ENCODE measurements at regions of chr1 and their contacts with region 1.

Region 1: GRCh38 chr1:213015099-213016050 is at the start of gene ANGEL2:
- DNase-seq: peak; percentile 77 to 97 (median 93)
- ATAC-seq: peak; percentile 99
- H3K4me3 ChIP-seq: peak within 1 kb of the TSS; percentile 87
- H3K4me3 Mint-ChIP-seq: peak within 1 kb of the TSS; percentile 92 to 100 (median 100)
- H3K27ac ChIP-seq: peak within 1 kb of the TSS; percentile 82
- H3K27ac Mint-ChIP-seq: peak within 1 kb of the TSS; percentile 94 to 100 (median 99)
- H3K4me1 ChIP-seq: peaks cover 12 to 19% of the 10 kb centered on the region in 2 donors
- H3K4me1 Mint-ChIP-seq: peaks cover 26 to 47% (median 40%) of the 10 kb centered on the region in 7 donors
- H3K27me3 ChIP-seq: no peaks in the 10 kb centered on the region
- H3K27me3 Mint-ChIP-seq: peaks cover 0 to 7% (median 0%) of the 10 kb centered on the region in 5 donors
- total RNA-seq, gene ANGEL2: 57.8 to 96.5 (median 63.4) TPM

Region 2: GRCh38 chr1:211830330-211831142 is 1184.8 kb before region 1 on chr1 and contains the start of gene LPGAT1:
- CTCF ChIA-PET with region 1: no interaction called
- POLR2A ChIA-PET with region 1: no interaction called
- intact Hi-C with region 1: loop called in 1 of 2 experiments (anchors 5 kb)
- DNase-seq: peak; percentile 28 to 81 (median 54)
- ATAC-seq: peak; percentile 92
- H3K4me3 ChIP-seq: peak within 1 kb of the TSS; percentile 68
- H3K4me3 Mint-ChIP-seq: peak within 1 kb of the TSS; percentile 88 to 97 (median 90)
- H3K27ac ChIP-seq: peak within 1 kb of the TSS; percentile 64
- H3K27ac Mint-ChIP-seq: peak within 1 kb of the TSS; percentile 60 to 94 (median 85)
- H3K4me1 ChIP-seq: peaks cover 20 to 40% of the 10 kb centered on the region in 2 donors
- H3K4me1 Mint-ChIP-seq: peaks cover 34 to 69% (median 64%) of the 10 kb centered on the region in 7 donors
- H3K27me3 ChIP-seq: no peaks in the 10 kb centered on the region
- H3K27me3 Mint-ChIP-seq: peaks cover 0 to 3% (median 0%) of the 10 kb centered on the region in 5 donors
- total RNA-seq, gene LPGAT1: 11.7 to 76.1 (median 19.3) TPM

Region 3: DNA sequence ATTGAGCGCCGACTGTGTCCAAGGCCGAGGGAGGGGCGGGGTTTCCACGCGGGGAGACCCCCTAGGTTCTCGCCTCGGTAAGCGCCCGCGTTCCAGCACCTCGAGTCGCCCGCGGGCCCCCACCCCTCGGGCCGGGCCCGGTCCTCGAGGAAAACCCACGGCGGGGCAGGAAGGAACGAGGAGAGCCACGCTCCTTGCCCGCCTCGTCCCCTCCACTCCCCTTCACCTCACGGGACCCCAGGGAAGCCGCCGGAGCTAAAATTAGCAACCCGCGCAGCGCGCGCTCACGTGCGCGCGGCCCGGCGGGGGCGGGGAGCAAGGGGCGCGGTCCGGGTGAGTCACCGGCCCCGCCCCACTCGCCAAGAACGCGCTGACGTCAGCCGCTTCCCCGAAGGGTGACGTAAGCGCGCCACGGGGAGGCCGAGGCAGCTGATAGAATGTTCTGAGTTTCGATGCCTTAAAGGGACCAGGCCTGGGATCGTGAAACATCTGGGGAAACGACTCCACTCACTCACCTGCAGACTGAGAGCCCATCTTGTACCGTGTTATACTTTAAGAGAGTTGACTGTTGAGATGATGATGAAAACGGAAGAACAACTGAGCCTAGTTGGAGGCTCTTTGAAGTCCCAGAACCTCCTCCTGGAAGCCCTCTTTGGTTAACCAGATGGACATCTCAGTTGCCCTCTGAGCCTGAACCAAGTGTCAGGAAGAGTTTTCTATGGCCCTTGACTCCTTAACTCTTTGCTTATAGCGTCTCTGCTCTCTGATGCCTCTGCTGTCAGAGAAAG is 456.5 kb before region 1 on chr1:
- CTCF ChIA-PET with region 1: no interaction called
- POLR2A ChIA-PET with region 1: no interaction called
- intact Hi-C with region 1: loop called (anchors 1 to 10 kb)
- DNase-seq: peak; percentile 83 to 93 (median 91)
- ATAC-seq: peak; percentile 97
- H3K4me3 ChIP-seq: peak overlapping the region; percentile 54
- H3K4me3 Mint-ChIP-seq: peak overlapping the region; percentile 82 to 95 (median 90)
- H3K27ac ChIP-seq: peak overlapping the region; percentile 74
- H3K27ac Mint-ChIP-seq: peak overlapping the region; percentile 91 to 99 (median 98)
- H3K4me1 ChIP-seq: peaks cover 7 to 13% of the 10 kb centered on the region in 2 donors
- H3K4me1 Mint-ChIP-seq: peaks cover 6 to 15% (median 9%) of the 10 kb centered on the region in 7 donors
- H3K27me3 ChIP-seq: no peaks in the 10 kb centered on the region
- H3K27me3 Mint-ChIP-seq: peaks cover 0 to 45% (median 0%) of the 10 kb centered on the region in 5 donors

Region 4: DNA sequence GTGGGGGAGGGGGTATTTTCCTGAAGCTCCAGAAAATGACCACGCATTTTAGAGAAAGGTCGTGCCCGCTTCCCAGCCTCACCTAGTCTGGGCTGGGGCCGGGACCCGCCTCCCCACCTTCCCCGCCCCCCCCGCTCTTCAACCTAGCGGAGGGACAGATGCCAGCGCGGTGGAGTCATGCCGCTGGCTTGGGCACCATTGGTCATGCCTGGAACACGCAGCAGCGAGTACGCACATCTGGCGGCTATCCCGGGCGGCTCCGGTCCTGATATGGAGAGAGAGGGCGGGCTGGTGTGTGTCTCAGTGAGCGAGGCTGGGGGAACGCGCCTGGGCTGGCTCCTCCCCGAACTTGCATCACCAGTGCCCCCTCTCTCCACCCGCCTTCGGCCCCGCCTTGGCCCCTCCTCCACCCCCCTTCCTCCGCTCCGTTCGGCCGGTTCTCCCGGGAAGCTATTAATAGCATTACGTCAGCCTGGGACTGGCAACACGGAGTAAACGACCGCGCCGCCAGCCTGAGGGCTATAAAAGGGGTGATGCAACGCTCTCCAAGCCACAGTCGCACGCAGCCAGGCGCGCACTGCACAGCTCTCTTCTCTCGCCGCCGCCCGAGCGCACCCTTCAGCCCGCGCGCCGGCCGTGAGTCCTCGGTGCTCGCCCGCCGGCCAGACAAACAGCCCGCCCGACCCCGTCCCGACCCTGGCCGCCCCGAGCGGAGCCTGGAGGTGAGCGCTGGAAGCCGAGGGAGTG is 407.0 kb before region 1 on chr1 and contains the start of gene ATF3:
- CTCF ChIA-PET with region 1: no interaction called
- POLR2A ChIA-PET with region 1: no interaction called
- intact Hi-C with region 1: loop called in 1 of 2 experiments (anchors 1 kb)
- DNase-seq: peak; percentile 27 to 90 (median 47)
- ATAC-seq: peak; percentile 87
- H3K4me3 ChIP-seq: peak within 1 kb of the TSS; percentile 70
- H3K4me3 Mint-ChIP-seq: peak within 1 kb of the TSS; percentile 90 to 98 (median 95)
- H3K27ac ChIP-seq: no peak within 1 kb of the TSS
- H3K27ac Mint-ChIP-seq: peak within 1 kb of the TSS; percentile 40 to 98 (median 76)
- H3K4me1 ChIP-seq: peaks cover 17 to 23% of the 10 kb centered on the region in 2 donors
- H3K4me1 Mint-ChIP-seq: peaks cover 17 to 55% (median 21%) of the 10 kb centered on the region in 7 donors
- H3K27me3 ChIP-seq: peaks cover 17 to 26% of the 10 kb centered on the region in 2 donors
- H3K27me3 Mint-ChIP-seq: peaks cover 47 to 66% (median 58%) of the 10 kb centered on the region in 5 donors
- total RNA-seq, gene ATF3: 0.57 to 83.4 (median 12.5) TPM

Region 5: DNA sequence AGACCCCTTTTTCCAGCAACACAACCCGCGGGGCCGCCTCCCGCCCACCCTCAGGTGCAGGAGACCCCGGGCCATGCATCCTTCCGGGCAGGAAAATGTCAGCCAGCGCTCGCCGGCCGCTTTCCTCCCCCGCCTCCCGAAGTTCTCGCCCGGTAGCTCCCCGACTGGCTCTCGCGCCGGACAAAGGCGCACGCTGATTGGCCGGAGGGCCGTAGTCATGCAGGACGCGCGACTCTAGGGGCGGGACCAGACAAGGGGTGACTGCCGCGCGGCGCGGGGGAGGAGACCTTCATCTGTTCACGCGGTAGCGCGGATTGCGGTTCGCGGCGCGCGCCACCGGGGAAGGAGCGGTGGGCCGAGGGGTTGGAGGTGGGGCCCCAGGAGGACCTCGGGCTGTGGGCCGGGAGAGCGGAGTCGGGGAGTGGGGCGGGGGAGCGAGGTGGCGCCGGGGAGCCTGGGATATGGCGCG is 157.3 kb before region 1 on chr1 and contains the start of gene FLVCR1:
- CTCF ChIA-PET with region 1: no interaction called
- POLR2A ChIA-PET with region 1: no interaction called
- intact Hi-C with region 1: loop called (anchors 1 kb)
- DNase-seq: peak; percentile 74 to 96 (median 80)
- ATAC-seq: peak; percentile 99
- H3K4me3 ChIP-seq: peak within 1 kb of the TSS; percentile 72
- H3K4me3 Mint-ChIP-seq: peak within 1 kb of the TSS in 6 of 10 donors; percentile 95 to 97 (median 96)
- H3K27ac ChIP-seq: peak within 1 kb of the TSS; percentile 68
- H3K27ac Mint-ChIP-seq: peak within 1 kb of the TSS; percentile 77 to 96 (median 89)
- H3K4me1 ChIP-seq: peaks cover 9 to 16% of the 10 kb centered on the region in 2 donors
- H3K4me1 Mint-ChIP-seq: peaks cover 9 to 34% (median 21%) of the 10 kb centered on the region in 7 donors
- H3K27me3 ChIP-seq: no peaks in the 10 kb centered on the region
- H3K27me3 Mint-ChIP-seq: no peaks in the 10 kb centered on the region
- total RNA-seq, gene FLVCR1: 7.4 to 12.2 (median 8.2) TPM

Region 6: GRCh38 chr1:212967801-212968200 is 47.6 kb before region 1 on chr1:
- CTCF ChIA-PET with region 1: no interaction called
- POLR2A ChIA-PET with region 1: no interaction called
- intact Hi-C with region 1: no loop called
- DNase-seq: no peak
- ATAC-seq: no peak
- H3K4me3 ChIP-seq: no peak overlapping the region
- H3K4me3 Mint-ChIP-seq: no peak overlapping the region
- H3K27ac ChIP-seq: no peak overlapping the region
- H3K27ac Mint-ChIP-seq: no peak overlapping the region
- H3K4me1 ChIP-seq: no peaks in the 10 kb centered on the region
- H3K4me1 Mint-ChIP-seq: peaks cover 0 to 5% (median 0%) of the 10 kb centered on the region in 7 donors
- H3K27me3 ChIP-seq: peaks cover 0 to 4% of the 10 kb centered on the region in 2 donors
- H3K27me3 Mint-ChIP-seq: peaks cover 13 to 38% (median 13%) of the 10 kb centered on the region in 5 donors

Region 7: DNA sequence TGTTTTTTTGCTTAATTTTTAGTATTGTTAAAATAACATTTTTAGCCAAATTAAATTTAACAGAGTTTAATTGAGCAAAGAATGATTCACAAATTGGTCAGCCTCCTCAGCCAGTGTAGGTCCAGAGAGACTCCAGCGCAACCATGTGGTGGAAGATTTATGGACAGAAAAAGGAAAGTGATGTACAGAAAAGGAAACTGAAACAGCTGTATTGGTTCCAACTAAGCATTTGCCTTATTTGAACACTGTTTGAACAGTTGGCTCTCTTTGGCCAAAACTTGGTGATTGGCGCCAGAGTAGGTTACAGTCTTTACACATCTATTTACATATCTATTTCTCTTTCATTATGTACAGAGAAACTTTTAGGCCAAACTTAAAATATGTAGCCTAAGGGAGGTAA is 55.0 kb after region 1 on chr1:
- CTCF ChIA-PET with region 1: no interaction called
- POLR2A ChIA-PET with region 1: no interaction called
- intact Hi-C with region 1: loop called in 1 of 2 experiments (anchors 5 kb)
- DNase-seq: no peak
- ATAC-seq: peak; percentile 71
- H3K4me3 ChIP-seq: no peak overlapping the region
- H3K4me3 Mint-ChIP-seq: peak overlapping the region in 1 of 10 donors; percentile 53
- H3K27ac ChIP-seq: no peak overlapping the region
- H3K27ac Mint-ChIP-seq: peak overlapping the region in 1 of 9 donors; percentile 9
- H3K4me1 ChIP-seq: peaks cover 0 to 7% of the 10 kb centered on the region in 2 donors
- H3K4me1 Mint-ChIP-seq: peaks cover 7 to 36% (median 10%) of the 10 kb centered on the region in 7 donors
- H3K27me3 ChIP-seq: no peaks in the 10 kb centered on the region
- H3K27me3 Mint-ChIP-seq: no peaks in the 10 kb centered on the region

Region 8: GRCh38 chr1:213274140-213274539 is 258.8 kb after region 1 on chr1:
- CTCF ChIA-PET with region 1: no interaction called
- POLR2A ChIA-PET with region 1: no interaction called
- intact Hi-C with region 1: no loop called
- DNase-seq: no peak
- ATAC-seq: no peak
- H3K4me3 ChIP-seq: no peak overlapping the region
- H3K4me3 Mint-ChIP-seq: no peak overlapping the region
- H3K27ac ChIP-seq: no peak overlapping the region
- H3K27ac Mint-ChIP-seq: no peak overlapping the region
- H3K4me1 ChIP-seq: no peaks in the 10 kb centered on the region
- H3K4me1 Mint-ChIP-seq: peaks cover 0 to 12% (median 0%) of the 10 kb centered on the region in 7 donors
- H3K27me3 ChIP-seq: no peaks in the 10 kb centered on the region
- H3K27me3 Mint-ChIP-seq: no peaks in the 10 kb centered on the region

Region 9: GRCh38 chr1:213541641-213542040 is 526.3 kb after region 1 on chr1:
- CTCF ChIA-PET with region 1: no interaction called
- POLR2A ChIA-PET with region 1: no interaction called
- intact Hi-C with region 1: no loop called
- DNase-seq: no peak
- ATAC-seq: no peak
- H3K4me3 ChIP-seq: no peak overlapping the region
- H3K4me3 Mint-ChIP-seq: no peak overlapping the region
- H3K27ac ChIP-seq: no peak overlapping the region
- H3K27ac Mint-ChIP-seq: no peak overlapping the region
- H3K4me1 ChIP-seq: no peaks in the 10 kb centered on the region
- H3K4me1 Mint-ChIP-seq: no peaks in the 10 kb centered on the region
- H3K27me3 ChIP-seq: no peaks in the 10 kb centered on the region
- H3K27me3 Mint-ChIP-seq: peaks cover 0 to 13% (median 5%) of the 10 kb centered on the region in 5 donors

Measured in naive thymus-derived CD4-positive, alpha-beta T cell (primary cell).